ENCODE measurements at regions of chr6 and their contacts with region 1.

Region 1: DNA sequence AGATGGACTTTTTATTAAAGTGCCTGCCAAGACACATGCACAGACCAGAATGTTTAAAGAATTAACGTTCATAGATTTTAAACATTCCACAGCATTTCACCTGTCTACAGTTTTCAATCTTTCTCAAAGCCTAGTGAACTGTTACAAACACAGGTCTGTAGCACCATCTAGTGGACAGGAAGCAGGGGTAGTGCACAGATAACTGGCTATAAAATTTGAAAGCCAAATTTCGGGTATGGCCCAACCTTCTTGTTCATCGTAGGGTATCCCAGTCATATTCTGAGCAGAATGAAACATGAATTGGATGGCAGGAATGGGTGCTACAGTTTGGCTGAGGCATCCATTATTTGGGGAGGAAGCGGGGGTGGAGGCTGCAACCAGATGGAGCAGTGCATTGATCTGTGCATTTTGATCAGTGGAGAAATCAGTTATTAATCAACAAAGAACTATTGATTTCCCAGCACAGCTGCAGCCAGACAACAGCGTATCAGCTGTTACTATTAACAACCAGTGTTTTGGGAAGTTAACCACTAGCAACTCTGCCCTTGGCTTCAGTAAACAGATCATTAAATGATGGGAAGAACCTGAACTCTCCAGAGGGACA is 56.1 kb upstream of the B3GAT2 start:
- H3K4me3 Mint-ChIP-seq: no peak overlapping the region
- H3K27ac Mint-ChIP-seq: no peak overlapping the region
- H3K4me1 Mint-ChIP-seq: peaks cover 5% of the 10 kb centered on the region
- H3K27me3 Mint-ChIP-seq: peaks cover 3% of the 10 kb centered on the region

Region 2: DNA sequence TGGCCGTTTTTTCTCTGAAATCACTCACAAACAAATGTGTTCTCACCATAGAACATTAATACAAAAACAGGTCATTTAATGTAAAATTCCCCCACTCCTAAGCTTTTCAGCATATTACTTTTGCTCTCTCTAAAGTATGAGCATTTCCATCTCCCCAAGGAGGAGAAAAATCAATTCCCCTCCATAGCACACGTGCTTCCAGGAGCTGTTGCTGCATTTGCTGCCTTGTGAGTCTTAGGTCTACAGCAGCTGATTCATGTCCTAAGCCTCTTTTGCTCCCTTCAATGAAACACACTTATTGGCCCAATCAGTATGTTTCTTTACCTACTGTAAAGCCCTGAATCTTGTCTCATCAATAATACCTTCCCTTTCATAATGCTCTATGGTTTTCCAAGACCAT is 703.7 kb before region 1 on chr6:
- intact Hi-C with region 1: loop called (anchors 2 kb)
- H3K4me3 Mint-ChIP-seq: no peak overlapping the region
- H3K27ac Mint-ChIP-seq: no peak overlapping the region
- H3K4me1 Mint-ChIP-seq: no peaks in the 10 kb centered on the region
- H3K27me3 Mint-ChIP-seq: no peaks in the 10 kb centered on the region

Region 3: DNA sequence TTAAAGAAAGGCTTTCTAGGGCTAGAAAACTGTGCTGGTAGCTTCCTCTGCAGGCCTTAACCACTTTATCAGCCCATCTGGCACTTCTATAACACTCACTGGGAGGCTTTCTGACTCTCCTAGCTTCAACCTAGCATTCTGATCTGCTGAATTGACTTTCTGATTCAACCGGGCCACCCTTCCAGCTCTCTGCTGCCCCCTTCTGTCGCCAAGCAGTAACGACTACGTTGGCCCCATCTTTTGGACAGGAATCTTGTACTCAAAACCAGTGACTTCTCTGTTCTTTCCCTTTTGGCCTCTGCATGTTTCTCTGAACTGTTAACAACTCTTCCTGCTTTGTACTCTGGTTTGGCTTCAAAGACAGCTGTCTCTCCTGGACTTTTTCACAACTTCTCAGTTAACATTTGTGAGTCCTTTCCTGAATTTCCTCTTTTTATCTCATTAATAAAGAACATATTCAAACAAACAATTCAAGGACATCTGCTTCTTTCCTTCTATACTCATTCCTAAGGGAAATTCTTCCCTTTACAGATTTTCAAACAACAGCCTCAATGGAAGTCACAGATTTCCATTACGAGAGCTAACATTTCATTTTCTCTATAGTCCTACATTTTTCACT is 643.5 kb before region 1 on chr6:
- intact Hi-C with region 1: loop called (anchors 10 kb)
- H3K4me3 Mint-ChIP-seq: no peak overlapping the region
- H3K27ac Mint-ChIP-seq: no peak overlapping the region
- H3K4me1 Mint-ChIP-seq: peaks cover 5% of the 10 kb centered on the region
- H3K27me3 Mint-ChIP-seq: peaks cover 8% of the 10 kb centered on the region

Region 4: DNA sequence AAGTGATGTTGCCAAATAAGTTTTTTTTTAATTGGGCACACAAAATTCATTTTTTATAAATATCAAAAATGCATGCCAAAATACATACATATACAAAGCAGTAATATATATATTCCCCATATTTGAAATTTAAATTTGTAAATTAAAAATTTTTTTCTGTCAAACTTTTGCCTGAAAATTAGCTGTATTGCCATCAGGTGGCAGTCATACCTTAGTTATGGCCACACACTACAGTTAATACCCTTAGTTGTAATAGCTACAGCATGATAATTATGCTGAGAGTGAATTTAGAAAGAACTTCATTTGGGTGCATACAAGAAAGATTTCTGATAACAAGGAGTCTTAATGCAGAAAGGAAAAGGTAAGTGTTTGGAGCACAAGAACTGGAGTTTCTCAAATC is 492.4 kb before region 1 on chr6:
- intact Hi-C with region 1: loop called (anchors 5 kb)
- H3K4me3 Mint-ChIP-seq: no peak overlapping the region
- H3K27ac Mint-ChIP-seq: no peak overlapping the region
- H3K4me1 Mint-ChIP-seq: no peaks in the 10 kb centered on the region
- H3K27me3 Mint-ChIP-seq: no peaks in the 10 kb centered on the region

Region 5: DNA sequence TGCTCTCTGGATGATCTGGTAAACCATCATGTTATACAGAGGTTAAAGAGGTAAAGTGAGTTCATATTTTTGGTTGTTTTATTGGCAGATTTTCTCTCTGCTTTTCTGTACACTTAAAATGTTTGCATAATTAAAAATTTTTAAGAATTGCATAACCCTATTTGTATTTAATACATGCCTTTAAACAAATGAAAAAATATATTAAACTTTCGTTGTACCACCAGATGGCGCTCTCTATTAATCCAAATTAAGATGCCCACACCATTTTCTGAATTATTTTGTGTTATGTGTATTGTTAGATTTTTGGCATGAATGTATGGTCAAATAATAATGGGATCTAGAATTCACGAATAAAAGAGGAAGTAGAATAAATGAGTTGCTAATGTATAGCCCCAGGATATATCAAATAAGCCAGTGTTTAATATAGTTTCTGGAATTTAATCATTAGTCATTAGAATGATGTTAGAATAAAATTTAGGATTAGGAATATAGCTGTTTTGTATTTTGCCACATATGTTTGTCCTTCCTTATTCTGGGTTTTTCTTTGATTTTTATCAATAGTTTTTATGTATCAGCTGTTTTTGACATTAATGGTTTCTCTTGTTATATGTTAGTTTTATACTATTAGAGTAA is 306.4 kb before region 1 on chr6:
- intact Hi-C with region 1: loop called (anchors 5 kb)
- H3K4me3 Mint-ChIP-seq: no peak overlapping the region
- H3K27ac Mint-ChIP-seq: no peak overlapping the region
- H3K4me1 Mint-ChIP-seq: peaks cover 23% of the 10 kb centered on the region
- H3K27me3 Mint-ChIP-seq: no peaks in the 10 kb centered on the region

Region 6: DNA sequence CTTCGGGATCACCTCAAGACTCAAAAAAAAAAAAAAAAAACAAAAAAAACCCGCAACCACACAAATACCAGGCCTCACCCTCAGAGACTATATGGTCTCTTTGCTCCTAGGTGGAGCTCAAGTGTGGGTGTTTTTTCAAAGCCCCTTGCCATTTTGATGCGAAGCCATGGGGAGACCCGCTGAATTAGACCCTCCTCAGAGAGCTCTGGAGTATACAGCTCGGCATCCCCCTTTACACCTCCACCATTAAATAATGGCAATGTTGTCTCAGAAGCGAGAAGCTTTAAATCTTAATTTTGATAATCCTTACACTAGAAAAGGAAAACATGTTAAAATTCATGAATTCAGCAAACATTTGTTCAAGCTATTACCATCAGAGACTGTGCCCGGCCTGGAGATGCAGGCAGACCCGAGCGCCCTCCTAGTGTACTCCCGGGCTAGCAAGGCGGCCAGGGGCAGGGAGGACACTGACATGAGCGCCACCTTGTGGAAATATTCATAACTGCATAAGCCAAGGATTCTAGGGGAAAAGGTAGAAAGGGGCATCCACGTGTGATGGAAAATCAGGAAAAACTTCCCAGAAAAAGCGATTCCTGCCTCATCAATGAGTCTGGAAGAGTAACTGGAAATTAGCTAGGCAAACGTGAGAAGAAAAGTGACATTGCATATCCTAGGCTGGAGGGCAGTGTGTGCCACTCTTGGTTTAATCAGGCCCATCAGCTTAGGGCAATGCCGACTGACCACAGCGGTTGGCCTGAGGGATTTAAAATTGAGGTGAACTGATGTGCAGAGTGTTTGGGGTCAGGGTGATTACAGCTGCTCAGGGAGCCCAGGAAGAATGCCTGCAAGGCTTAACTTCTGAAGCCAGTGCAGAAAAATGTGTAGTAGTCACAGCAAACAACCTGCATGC is 128.6 kb before region 1 on chr6:
- intact Hi-C with region 1: loop called (anchors 10 kb)
- H3K4me3 Mint-ChIP-seq: no peak overlapping the region
- H3K27ac Mint-ChIP-seq: no peak overlapping the region
- H3K4me1 Mint-ChIP-seq: no peaks in the 10 kb centered on the region
- H3K27me3 Mint-ChIP-seq: no peaks in the 10 kb centered on the region